Activated CD4-positive, alpha-beta T cell treated with anti-CD3 and anti-CD28 coated beads for 36 hours (primary cell): ENCODE measurements at regions of chr7 and their contacts with region 1.

Region 1: GRCh38 chr7:97179454-97180104 is 62.1 kb downstream of the SDHAF3 start:
- DNase-seq: peak; percentile 59
- ATAC-seq: no peak
- H3K4me3 Mint-ChIP-seq: no peak overlapping the region
- H3K27ac Mint-ChIP-seq: no peak overlapping the region
- H3K4me1 Mint-ChIP-seq: peaks cover 2% of the 10 kb centered on the region
- H3K27me3 Mint-ChIP-seq: no peaks in the 10 kb centered on the region

Region 2: DNA sequence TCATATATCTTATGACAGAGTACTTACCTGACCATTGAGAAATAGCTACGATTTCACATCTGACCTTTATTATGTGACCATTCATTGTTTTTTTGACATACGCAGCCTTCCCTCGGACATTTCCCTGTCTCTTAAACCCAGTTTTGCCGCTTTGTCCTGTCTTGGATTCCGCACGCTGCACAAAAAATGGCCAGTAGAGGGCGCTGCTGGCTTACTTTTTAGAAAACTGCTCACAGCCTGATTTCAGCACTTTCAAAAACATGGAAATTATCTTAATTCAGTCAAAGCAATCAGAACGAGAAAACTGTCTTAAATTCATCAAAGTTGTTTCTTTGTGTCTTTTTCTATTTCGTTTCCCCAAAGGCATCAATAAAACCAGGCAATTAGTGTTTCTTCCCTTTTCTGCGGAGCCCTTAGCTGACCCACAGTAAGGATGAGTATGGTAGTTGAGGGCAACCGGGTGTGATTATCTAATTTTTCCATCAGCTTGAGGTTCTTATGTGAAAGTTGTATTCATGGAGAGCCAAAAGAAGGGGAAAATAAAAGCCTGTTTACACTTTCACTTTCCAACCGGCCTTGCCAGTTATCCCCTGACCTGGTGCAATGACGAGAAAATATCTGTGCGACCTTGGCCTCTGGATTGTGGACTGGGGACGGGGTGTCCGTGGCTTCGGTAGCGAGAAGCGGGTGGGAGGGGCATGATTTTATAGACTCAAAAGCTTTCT is 1262.8 kb before region 1 on chr7:
- CTCF ChIA-PET with region 1: interaction called, 4 read pairs
- POLR2A ChIA-PET with region 1: no interaction called
- intact Hi-C with region 1: loop called in 1 of 2 experiments (anchors 2 kb)
- DNase-seq: peak; percentile 86
- ATAC-seq: no peak
- H3K4me3 Mint-ChIP-seq: no peak overlapping the region
- H3K27ac Mint-ChIP-seq: no peak overlapping the region
- H3K4me1 Mint-ChIP-seq: peaks cover 2% of the 10 kb centered on the region
- H3K27me3 Mint-ChIP-seq: peaks cover 15% of the 10 kb centered on the region

Region 3: GRCh38 chr7:97043281-97043680 is 136.3 kb before region 1 on chr7:
- CTCF ChIA-PET with region 1: no interaction called
- POLR2A ChIA-PET with region 1: no interaction called
- intact Hi-C with region 1: no loop called
- DNase-seq: no peak
- ATAC-seq: no peak
- H3K4me3 Mint-ChIP-seq: no peak overlapping the region
- H3K27ac Mint-ChIP-seq: no peak overlapping the region
- H3K4me1 Mint-ChIP-seq: no peaks in the 10 kb centered on the region
- H3K27me3 Mint-ChIP-seq: peaks cover 37% of the 10 kb centered on the region

Region 4: GRCh38 chr7:97104719-97105238 is 74.8 kb before region 1 on chr7:
- CTCF ChIA-PET with region 1: interaction called, 15 read pairs
- POLR2A ChIA-PET with region 1: no interaction called
- intact Hi-C with region 1: loop called (anchors 1 kb)
- DNase-seq: peak; percentile 85
- ATAC-seq: peak; percentile 85
- H3K4me3 Mint-ChIP-seq: no peak overlapping the region
- H3K27ac Mint-ChIP-seq: no peak overlapping the region
- H3K4me1 Mint-ChIP-seq: no peaks in the 10 kb centered on the region
- H3K27me3 Mint-ChIP-seq: peaks cover 16% of the 10 kb centered on the region

Region 5: GRCh38 chr7:97117372-97118188 is 62.0 kb before region 1 on chr7 and contains the start of gene SDHAF3:
- CTCF ChIA-PET with region 1: interaction called, 5 read pairs
- POLR2A ChIA-PET with region 1: no interaction called
- intact Hi-C with region 1: loop called in 1 of 2 experiments (anchors 5 kb)
- DNase-seq: peak; percentile 99
- ATAC-seq: peak; percentile 95
- H3K4me3 Mint-ChIP-seq: peak within 1 kb of the TSS; percentile 82
- H3K27ac Mint-ChIP-seq: peak within 1 kb of the TSS; percentile 95
- H3K4me1 Mint-ChIP-seq: peaks cover 38% of the 10 kb centered on the region
- H3K27me3 Mint-ChIP-seq: no peaks in the 10 kb centered on the region
- total RNA-seq, gene SDHAF3: 30.2 to 44.3 TPM

Region 6: DNA sequence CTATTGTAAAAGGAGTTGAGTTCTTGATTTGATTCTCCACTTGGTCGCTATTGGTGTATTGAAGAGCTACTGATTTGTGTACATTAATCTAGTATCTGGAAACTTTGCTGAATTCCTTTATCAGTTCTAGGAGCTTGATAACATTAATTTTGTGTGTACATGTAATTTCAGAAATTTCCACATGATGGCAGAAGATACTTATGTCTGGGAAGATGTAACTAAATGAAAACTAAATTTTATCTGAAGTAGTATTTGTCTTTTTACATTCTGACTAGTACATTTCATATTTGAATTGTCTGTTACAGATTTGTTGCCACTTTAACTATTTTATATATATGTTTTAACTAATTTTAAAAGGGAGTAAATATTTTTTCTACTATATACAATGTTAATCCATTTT is 34.5 kb before region 1 on chr7:
- CTCF ChIA-PET with region 1: interaction called, 8 read pairs
- POLR2A ChIA-PET with region 1: no interaction called
- intact Hi-C with region 1: loop called (anchors 1 kb)
- DNase-seq: no peak
- ATAC-seq: no peak
- H3K4me3 Mint-ChIP-seq: no peak overlapping the region
- H3K27ac Mint-ChIP-seq: no peak overlapping the region
- H3K4me1 Mint-ChIP-seq: peaks cover 5% of the 10 kb centered on the region
- H3K27me3 Mint-ChIP-seq: no peaks in the 10 kb centered on the region

Region 7: DNA sequence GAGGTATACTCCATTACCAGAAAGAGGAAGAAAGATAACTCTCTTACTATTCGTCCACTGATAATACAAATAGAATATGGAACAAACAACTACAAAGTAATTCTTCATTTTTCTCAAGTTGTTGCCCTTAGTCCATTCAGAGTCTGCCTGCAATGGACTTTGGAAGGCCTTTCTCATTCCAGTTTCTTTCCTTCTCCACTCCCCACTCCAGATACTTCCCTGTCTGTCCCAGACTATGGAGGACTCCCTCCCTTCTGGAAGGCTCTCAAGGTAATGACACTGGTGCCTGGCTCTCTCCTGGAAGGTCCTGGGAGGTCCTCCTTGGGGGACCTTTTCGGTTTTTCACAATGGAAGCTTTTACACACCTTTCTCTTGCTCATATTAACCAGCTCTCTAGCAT is 105.8 kb after region 1 on chr7:
- CTCF ChIA-PET with region 1: no interaction called
- POLR2A ChIA-PET with region 1: no interaction called
- intact Hi-C with region 1: no loop called
- DNase-seq: no peak
- ATAC-seq: no peak
- H3K4me3 Mint-ChIP-seq: no peak overlapping the region
- H3K27ac Mint-ChIP-seq: no peak overlapping the region
- H3K4me1 Mint-ChIP-seq: no peaks in the 10 kb centered on the region
- H3K27me3 Mint-ChIP-seq: peaks cover 5% of the 10 kb centered on the region

Region 8: GRCh38 chr7:97845622-97846203 is 666.1 kb after region 1 on chr7:
- CTCF ChIA-PET with region 1: no interaction called
- POLR2A ChIA-PET with region 1: no interaction called
- intact Hi-C with region 1: loop called in 1 of 2 experiments (anchors 5 kb)
- DNase-seq: peak; percentile 20
- ATAC-seq: no peak
- H3K4me3 Mint-ChIP-seq: no peak overlapping the region
- H3K27ac Mint-ChIP-seq: no peak overlapping the region
- H3K4me1 Mint-ChIP-seq: no peaks in the 10 kb centered on the region
- H3K27me3 Mint-ChIP-seq: peaks cover 5% of the 10 kb centered on the region